CD4-positive, alpha-beta T cell (primary cell): ENCODE measurements at regions of chr9 and their contacts with region 1.

Region 1: GRCh38 chr9:125746017-125746773 is 978 bp upstream of the PBX3 start:
- DNase-seq: peak; percentile 78 to 96 (median 90)
- ATAC-seq: peak; percentile 83
- H3K4me3 ChIP-seq: peak overlapping the region; percentile 90
- H3K4me3 Mint-ChIP-seq: peak overlapping the region; percentile 100
- H3K27ac ChIP-seq: peak overlapping the region; percentile 56 to 63
- H3K27ac Mint-ChIP-seq: peak overlapping the region; percentile 91
- H3K4me1 ChIP-seq: peaks cover 15% of the 10 kb centered on the region
- H3K4me1 Mint-ChIP-seq: peaks cover 37% of the 10 kb centered on the region
- H3K27me3 ChIP-seq: no peaks in the 10 kb centered on the region
- H3K27me3 Mint-ChIP-seq: no peaks in the 10 kb centered on the region
- CTCF ChIP-seq: no peak

Region 2: GRCh38 chr9:125706661-125707471 is 39.3 kb before region 1 on chr9 and contains the start of gene MAPKAP1:
- CTCF ChIA-PET with region 1: no interaction called
- POLR2A ChIA-PET with region 1: interaction called, 6 read pairs
- intact Hi-C with region 1: loop called (anchors 1 to 2 kb)
- DNase-seq: peak; percentile 81 to 98 (median 92)
- ATAC-seq: peak; percentile 98
- H3K4me3 ChIP-seq: peak within 1 kb of the TSS; percentile 59
- H3K4me3 Mint-ChIP-seq: peak within 1 kb of the TSS; percentile 89
- H3K27ac ChIP-seq: peak within 1 kb of the TSS; percentile 26 to 67
- H3K27ac Mint-ChIP-seq: peak within 1 kb of the TSS; percentile 89
- H3K4me1 ChIP-seq: peaks cover 28% of the 10 kb centered on the region
- H3K4me1 Mint-ChIP-seq: peaks cover 51% of the 10 kb centered on the region
- H3K27me3 ChIP-seq: no peaks in the 10 kb centered on the region
- H3K27me3 Mint-ChIP-seq: peaks cover 7% of the 10 kb centered on the region
- CTCF ChIP-seq: no peak
- total RNA-seq, gene MAPKAP1: 40.3 to 44.9 TPM

Region 3: DNA sequence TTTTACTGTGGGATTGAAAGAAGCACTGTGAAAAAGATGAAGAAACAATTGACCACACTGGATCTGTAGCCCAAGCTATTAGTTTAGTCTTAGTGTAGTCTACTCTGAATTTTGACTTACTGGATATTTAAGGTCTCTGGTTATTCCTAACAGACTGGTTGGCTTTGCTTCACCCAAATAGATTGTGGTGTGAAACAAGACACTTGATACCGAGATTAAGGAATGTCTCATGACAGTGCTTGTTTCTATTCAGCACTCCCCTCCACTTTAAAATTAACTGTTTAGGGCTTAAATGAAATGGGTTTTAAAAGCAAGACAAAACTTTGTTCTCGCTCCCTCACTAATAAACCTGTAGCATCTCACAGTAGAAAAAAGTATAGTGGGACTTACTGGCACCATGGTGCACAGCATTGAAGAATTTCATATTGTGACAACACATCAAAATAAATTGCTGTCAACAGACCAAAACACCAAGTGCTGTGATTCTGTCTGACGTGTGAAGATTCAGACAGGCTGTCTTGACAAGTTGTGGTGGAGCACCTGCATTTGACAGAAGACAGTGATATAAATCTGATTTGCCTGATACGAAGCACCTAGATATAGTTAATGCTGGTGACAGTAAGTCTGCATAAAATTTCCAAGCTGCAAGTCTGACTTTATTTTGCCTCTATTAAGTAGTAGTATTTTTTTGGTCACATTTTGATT is 74.1 kb after region 1 on chr9:
- CTCF ChIA-PET with region 1: no interaction called
- POLR2A ChIA-PET with region 1: interaction called, 6 read pairs
- intact Hi-C with region 1: loop called (anchors 5 kb)
- DNase-seq: peak in 3 of 14 experiments; percentile 24 to 51 (median 50)
- ATAC-seq: peak; percentile 46
- H3K4me3 ChIP-seq: no peak overlapping the region
- H3K4me3 Mint-ChIP-seq: peak overlapping the region; percentile 10
- H3K27ac ChIP-seq: no peak overlapping the region
- H3K27ac Mint-ChIP-seq: peak overlapping the region; percentile 77
- H3K4me1 ChIP-seq: peaks cover 9% of the 10 kb centered on the region
- H3K4me1 Mint-ChIP-seq: peaks cover 44% of the 10 kb centered on the region
- H3K27me3 ChIP-seq: no peaks in the 10 kb centered on the region
- H3K27me3 Mint-ChIP-seq: no peaks in the 10 kb centered on the region
- CTCF ChIP-seq: no peak

Region 4: DNA sequence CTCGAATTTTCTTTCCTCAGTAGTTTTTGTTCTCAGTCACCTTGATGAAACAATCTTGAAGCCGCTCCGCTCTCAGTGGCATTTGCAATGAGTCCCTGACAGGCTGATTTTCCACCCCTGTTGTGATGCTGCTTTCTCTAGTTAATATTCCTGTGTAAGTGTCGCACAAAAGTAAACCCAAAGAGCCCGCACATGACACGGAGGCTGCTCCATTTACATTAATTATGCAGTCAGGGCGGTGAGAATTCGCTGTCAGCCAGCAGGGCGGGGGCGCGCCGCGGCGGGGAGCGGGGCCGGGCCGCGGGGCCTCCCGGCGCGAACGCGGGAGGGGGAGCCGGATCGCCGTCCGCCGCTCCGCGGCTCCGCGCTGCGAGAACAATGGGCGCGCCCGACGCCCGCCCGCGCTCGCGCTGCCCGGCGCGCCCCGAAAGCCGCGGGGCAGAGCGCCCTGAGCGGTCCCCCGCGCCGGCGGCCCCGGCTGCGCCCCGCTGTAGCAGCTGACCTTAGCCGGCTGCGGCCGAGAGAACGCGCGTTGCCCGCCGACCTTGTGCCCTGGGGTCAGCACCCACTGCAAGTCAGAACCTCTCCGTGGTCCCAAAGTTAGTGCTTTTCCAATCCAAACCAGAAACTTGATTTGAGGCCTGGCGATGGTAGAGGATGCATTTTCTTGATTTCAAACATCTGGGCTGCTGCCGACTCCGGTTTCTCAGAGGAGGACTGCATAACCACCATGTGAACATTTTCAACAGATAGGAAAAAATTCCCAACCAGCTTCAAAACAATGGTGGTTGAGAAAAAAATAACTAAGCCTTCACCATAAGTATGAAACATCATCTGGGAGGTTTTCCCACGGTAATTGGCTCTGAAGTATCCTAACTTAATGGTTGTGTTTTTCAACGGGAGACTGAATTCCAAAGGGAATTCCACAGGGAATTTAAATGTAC is 143.6 kb after region 1 on chr9:
- CTCF ChIA-PET with region 1: no interaction called
- POLR2A ChIA-PET with region 1: no interaction called
- intact Hi-C with region 1: loop called in 1 of 2 experiments (anchors 5 kb)
- DNase-seq: peak in 13 of 14 experiments; percentile 3 to 69 (median 26)
- ATAC-seq: peak; percentile 84
- H3K4me3 ChIP-seq: peak overlapping the region; percentile 49
- H3K4me3 Mint-ChIP-seq: peak overlapping the region; percentile 78
- H3K27ac ChIP-seq: no peak overlapping the region
- H3K27ac Mint-ChIP-seq: no peak overlapping the region
- H3K4me1 ChIP-seq: peaks cover 9% of the 10 kb centered on the region
- H3K4me1 Mint-ChIP-seq: peaks cover 28% of the 10 kb centered on the region
- H3K27me3 ChIP-seq: peaks cover 10 to 13% of the 10 kb centered on the region in 2 experiments
- H3K27me3 Mint-ChIP-seq: peaks cover 36% of the 10 kb centered on the region
- CTCF ChIP-seq: no peak

Region 5: DNA sequence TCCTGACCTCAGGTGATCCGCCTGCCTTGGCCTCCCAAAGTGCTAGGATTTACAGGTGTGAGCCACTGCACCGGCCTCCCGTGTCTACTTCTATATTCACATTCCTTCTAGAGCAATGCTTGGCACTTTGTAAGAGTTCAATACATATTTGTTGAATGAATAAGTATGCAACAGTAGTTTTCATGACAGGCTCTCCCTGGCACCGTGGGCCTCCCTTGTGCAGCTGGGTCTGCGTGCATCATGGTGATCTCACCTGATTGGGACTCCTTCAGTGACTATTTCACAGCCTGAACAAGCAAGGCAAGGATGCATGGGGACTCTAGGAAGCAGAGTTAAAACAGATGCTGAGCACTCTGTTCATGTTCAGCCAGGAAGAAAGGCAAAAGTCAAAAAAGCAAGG is 1107.5 kb after region 1 on chr9:
- CTCF ChIA-PET with region 1: no interaction called
- POLR2A ChIA-PET with region 1: no interaction called
- intact Hi-C with region 1: loop called in 1 of 2 experiments (anchors 10 kb)
- DNase-seq: no peak
- ATAC-seq: no peak
- H3K4me3 ChIP-seq: no peak overlapping the region
- H3K4me3 Mint-ChIP-seq: no peak overlapping the region
- H3K27ac ChIP-seq: no peak overlapping the region
- H3K27ac Mint-ChIP-seq: no peak overlapping the region
- H3K4me1 ChIP-seq: no peaks in the 10 kb centered on the region
- H3K4me1 Mint-ChIP-seq: no peaks in the 10 kb centered on the region
- H3K27me3 ChIP-seq: peaks cover 4 to 20% of the 10 kb centered on the region in 2 experiments
- H3K27me3 Mint-ChIP-seq: peaks cover 50% of the 10 kb centered on the region
- CTCF ChIP-seq: no peak